ENCODE measurements at regions of chr14 and their contacts with region 1.

Region 1: GRCh38 chr14:75972801-75973421 is 8.9 kb downstream of the TGFB3 start:
- DNase-seq: peak; percentile 56 to 72
- ATAC-seq: peak; percentile 88 to 90
- H3K4me3 ChIP-seq: no peak overlapping the region
- H3K27ac ChIP-seq: peak overlapping the region; percentile 62 to 77 (median 73)
- H3K4me1 ChIP-seq: peaks cover 20 to 28% of the 10 kb centered on the region in 2 donors
- H3K27me3 ChIP-seq: no peaks in the 10 kb centered on the region
- CTCF ChIP-seq: no peak
- POLR2A ChIP-seq: no peak

Region 2: GRCh38 chr14:75418849-75419768 is 553.8 kb before region 1 on chr14:
- in situ Hi-C with region 1: no loop called
- intact Hi-C with region 1: no loop called
- DNase-seq: peak in 1 of 2 donors; percentile 33
- ATAC-seq: peak in 1 of 2 donors; percentile 14
- H3K4me3 ChIP-seq: no peak overlapping the region
- H3K27ac ChIP-seq: no peak overlapping the region
- H3K4me1 ChIP-seq: no peaks in the 10 kb centered on the region
- H3K27me3 ChIP-seq: no peaks in the 10 kb centered on the region
- CTCF ChIP-seq: no peak
- POLR2A ChIP-seq: no peak

Region 3: DNA sequence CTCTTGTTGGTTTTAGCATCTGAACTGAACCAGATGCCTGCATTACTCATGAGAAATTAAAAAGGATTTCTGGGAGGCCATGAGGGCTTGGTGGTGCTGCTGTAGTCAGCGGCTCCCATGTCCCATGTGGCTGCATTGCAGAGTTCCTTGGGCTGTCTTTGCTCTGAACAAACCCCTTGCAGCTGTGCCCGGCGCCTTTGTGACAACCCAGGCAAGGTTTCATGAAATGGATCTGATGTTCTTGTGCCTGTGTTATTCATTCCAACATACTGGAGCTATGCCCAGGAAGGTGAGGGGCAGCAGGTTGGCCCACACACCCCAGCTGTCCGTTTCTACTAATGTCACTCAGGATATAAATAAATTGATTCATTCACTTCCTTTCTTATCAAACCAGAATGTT is 31.9 kb before region 1 on chr14:
- in situ Hi-C with region 1: no loop called
- intact Hi-C with region 1: loop called (anchors 1 kb)
- DNase-seq: peak; percentile 88 to 95
- ATAC-seq: peak; percentile 97 to 98
- H3K4me3 ChIP-seq: no peak overlapping the region
- H3K27ac ChIP-seq: peak overlapping the region; percentile 77 to 83 (median 80)
- H3K4me1 ChIP-seq: peaks cover 5 to 18% of the 10 kb centered on the region in 2 donors
- H3K27me3 ChIP-seq: no peaks in the 10 kb centered on the region
- CTCF ChIP-seq: no peak
- POLR2A ChIP-seq: peak; percentile 50 to 64

Region 4: GRCh38 chr14:76012354-76012753 is 39.4 kb after region 1 on chr14:
- in situ Hi-C with region 1: no loop called
- intact Hi-C with region 1: no loop called
- DNase-seq: no peak
- ATAC-seq: peak; percentile 23 to 64
- H3K4me3 ChIP-seq: no peak overlapping the region
- H3K27ac ChIP-seq: peak overlapping the region; percentile 2 to 54 (median 42)
- H3K4me1 ChIP-seq: peaks cover 14 to 16% of the 10 kb centered on the region in 2 donors
- H3K27me3 ChIP-seq: no peaks in the 10 kb centered on the region
- CTCF ChIP-seq: no peak
- POLR2A ChIP-seq: no peak

Measured in gastrocnemius medialis (tissue), 4 donors.